MCF 10A (cell line): ENCODE measurements at regions of chr1 and their contacts with region 1.

Region 1: DNA sequence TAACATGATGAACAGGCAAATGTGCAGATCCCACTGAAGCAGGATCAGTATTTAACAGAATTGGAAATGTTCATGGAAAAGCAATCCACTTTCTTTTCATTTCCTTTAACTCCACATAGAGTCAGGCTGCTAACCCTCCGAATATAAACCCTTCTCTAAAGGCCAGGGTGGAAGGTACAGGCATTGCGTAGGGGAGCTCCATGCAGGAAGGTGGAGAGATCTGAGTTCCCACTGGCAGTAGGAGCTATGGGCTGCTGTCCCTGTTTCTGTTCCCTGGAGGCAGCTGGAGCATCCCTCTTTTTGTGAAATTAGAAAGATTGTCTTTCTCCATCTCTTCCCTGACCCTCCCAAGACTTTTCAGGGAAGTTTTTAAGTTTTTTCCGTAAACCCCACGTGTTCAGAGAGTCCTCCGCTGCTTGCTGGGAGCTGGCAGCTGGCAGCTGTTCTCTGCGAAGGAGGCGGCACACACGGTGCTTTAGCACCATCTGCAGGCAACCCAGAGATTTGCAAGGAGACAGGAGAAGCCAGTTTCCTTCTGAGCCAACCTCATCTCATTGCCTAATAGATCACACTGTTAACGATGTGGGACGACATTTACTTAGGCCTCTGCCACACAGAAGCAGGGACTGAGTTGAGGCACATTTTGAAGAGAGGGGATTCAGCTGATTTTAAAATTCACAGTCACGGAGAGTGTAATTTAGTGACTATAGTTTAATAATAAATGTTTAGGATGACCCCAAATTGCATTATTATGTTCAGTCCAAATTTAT is 55.4 kb upstream of the HOOK1 start:
- DNase-seq: peak; percentile 85
- H3K4me3 Mint-ChIP-seq: peak overlapping the region; percentile 38
- H3K27ac Mint-ChIP-seq: no peak overlapping the region
- H3K4me1 Mint-ChIP-seq: peaks cover 28% of the 10 kb centered on the region
- H3K27me3 Mint-ChIP-seq: no peaks in the 10 kb centered on the region
- CTCF ChIP-seq: peak; percentile 96

Region 2: DNA sequence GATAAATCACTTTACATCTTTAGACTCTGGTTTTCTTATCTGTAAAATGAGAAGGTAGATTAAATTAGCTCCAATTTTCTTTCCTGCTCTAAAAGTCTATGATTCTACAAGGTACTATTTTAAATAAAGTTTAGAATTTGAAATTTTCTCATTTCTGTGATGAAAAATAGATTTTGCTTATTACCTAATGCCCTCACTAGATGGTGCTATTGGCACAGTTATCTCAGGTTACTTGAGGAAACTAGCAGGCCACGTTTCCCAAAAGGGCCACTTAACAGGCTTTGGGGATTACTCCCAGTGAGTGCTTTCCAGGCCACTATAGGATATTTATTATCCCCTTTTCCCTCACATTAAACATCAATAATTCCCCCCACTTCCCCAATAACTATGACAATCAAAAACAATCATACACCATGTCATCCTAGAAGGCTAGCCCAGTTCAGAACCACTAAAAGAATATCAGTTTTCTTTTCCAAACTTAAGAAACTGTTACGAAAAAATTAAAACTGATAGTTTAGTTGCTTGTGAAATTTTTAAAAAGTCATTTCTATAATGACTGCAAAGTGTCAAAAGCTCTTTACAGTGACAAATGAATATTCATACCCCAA is 1243.4 kb before region 1 on chr1:
- CTCF ChIA-PET with region 1: no interaction called
- POLR2A ChIA-PET with region 1: no interaction called
- intact Hi-C with region 1: loop called (anchors 2 kb)
- DNase-seq: peak; percentile 79
- H3K4me3 Mint-ChIP-seq: no peak overlapping the region
- H3K27ac Mint-ChIP-seq: no peak overlapping the region
- H3K4me1 Mint-ChIP-seq: no peaks in the 10 kb centered on the region
- H3K27me3 Mint-ChIP-seq: no peaks in the 10 kb centered on the region
- CTCF ChIP-seq: peak; percentile 60

Region 3: DNA sequence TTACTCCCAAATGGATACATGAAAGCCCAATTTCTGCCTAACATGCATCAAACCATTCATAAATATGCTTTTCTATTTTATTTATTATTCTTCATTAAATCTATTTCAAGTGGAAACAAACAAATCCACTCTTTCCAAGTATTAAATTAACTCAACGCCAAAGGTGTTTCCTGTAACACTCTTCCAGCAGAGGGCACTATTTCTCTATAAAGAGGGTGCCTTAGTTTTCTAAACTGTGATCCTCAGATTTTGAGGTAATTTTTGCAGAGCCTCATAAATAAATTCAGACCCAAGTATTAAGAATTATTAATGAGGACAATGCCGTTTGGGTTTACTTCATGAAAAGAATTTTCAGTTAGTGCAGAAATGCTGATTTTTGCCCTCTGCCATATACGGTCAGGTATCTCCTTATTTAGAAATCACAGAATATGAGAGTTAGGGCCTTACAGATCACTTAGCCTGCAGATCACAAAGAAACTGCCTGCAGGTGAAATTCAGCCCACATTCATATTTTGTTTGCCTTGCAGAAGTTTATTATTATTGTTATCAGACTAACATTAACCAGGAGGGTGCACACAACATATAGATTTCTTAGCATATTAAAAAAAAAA is 1019.4 kb before region 1 on chr1:
- CTCF ChIA-PET with region 1: interaction called, 5 read pairs
- POLR2A ChIA-PET with region 1: interaction called, 4 read pairs
- intact Hi-C with region 1: loop called (anchors 2 kb)
- DNase-seq: peak; percentile 69
- H3K4me3 Mint-ChIP-seq: no peak overlapping the region
- H3K27ac Mint-ChIP-seq: no peak overlapping the region
- H3K4me1 Mint-ChIP-seq: peaks cover 6% of the 10 kb centered on the region
- H3K27me3 Mint-ChIP-seq: no peaks in the 10 kb centered on the region
- CTCF ChIP-seq: peak; percentile 54

Region 4: DNA sequence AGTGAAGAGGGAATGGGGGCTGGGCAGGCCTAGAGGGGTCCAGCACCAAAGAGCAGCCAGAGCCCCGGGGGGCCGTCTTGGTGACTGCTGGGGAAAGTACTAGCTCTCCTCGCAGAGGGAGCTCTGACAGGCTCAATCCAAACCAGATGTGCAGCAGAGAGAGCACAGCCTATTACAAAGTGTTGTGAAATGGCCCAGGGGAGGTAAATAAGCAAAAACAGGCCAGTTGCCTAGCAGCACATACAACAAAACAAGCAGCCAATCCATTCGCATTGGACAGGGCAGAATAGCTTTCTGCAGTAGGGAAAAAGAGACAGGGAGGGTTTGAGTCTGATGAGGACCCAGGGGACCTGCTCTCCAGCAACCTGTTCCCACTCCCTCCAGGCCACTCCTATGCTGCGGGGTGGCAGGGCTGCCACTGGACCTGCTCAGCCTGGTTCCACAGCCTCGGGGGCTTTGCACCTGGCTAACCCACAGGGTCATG is 702.1 kb before region 1 on chr1:
- CTCF ChIA-PET with region 1: no interaction called
- POLR2A ChIA-PET with region 1: no interaction called
- intact Hi-C with region 1: loop called (anchors 10 kb)
- DNase-seq: peak; percentile 77
- H3K4me3 Mint-ChIP-seq: no peak overlapping the region
- H3K27ac Mint-ChIP-seq: peak overlapping the region; percentile 50
- H3K4me1 Mint-ChIP-seq: peaks cover 21% of the 10 kb centered on the region
- H3K27me3 Mint-ChIP-seq: no peaks in the 10 kb centered on the region
- CTCF ChIP-seq: no peak

Region 5: DNA sequence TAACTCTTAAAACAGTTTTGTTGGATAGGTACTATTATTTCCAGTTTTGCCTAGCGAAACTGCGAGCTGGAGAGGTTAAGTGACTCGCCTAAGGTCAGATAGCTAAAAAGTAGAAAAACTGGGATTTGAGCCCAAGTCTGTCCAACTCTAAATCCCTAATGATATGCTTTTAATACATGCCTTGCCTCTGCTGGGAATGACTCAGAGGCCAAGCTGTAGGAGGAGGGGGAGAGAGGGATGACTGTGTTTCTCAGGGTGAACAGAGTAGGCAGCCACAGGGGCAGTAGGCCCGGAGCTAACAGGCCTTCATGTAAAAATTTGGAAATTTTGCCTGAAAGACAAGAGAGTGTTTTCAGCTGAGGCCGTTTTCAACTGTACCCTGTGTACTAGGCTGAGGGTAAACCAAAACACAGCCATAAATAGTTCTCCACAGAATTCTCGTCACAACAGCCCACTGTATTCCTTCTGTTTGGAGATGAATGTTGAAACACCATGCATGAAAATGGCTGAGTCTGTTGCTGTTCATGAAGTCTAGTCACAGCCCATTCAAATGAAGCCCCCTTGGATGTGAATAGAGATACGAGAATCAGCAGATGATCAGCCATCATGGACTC is 52.1 kb before region 1 on chr1:
- CTCF ChIA-PET with region 1: interaction called, 21 read pairs
- POLR2A ChIA-PET with region 1: interaction called, 8 read pairs
- intact Hi-C with region 1: loop called (anchors 2 kb)
- DNase-seq: peak; percentile 90
- H3K4me3 Mint-ChIP-seq: no peak overlapping the region
- H3K27ac Mint-ChIP-seq: peak overlapping the region; percentile 33
- H3K4me1 Mint-ChIP-seq: peaks cover 46% of the 10 kb centered on the region
- H3K27me3 Mint-ChIP-seq: no peaks in the 10 kb centered on the region
- CTCF ChIP-seq: no peak

Region 6: DNA sequence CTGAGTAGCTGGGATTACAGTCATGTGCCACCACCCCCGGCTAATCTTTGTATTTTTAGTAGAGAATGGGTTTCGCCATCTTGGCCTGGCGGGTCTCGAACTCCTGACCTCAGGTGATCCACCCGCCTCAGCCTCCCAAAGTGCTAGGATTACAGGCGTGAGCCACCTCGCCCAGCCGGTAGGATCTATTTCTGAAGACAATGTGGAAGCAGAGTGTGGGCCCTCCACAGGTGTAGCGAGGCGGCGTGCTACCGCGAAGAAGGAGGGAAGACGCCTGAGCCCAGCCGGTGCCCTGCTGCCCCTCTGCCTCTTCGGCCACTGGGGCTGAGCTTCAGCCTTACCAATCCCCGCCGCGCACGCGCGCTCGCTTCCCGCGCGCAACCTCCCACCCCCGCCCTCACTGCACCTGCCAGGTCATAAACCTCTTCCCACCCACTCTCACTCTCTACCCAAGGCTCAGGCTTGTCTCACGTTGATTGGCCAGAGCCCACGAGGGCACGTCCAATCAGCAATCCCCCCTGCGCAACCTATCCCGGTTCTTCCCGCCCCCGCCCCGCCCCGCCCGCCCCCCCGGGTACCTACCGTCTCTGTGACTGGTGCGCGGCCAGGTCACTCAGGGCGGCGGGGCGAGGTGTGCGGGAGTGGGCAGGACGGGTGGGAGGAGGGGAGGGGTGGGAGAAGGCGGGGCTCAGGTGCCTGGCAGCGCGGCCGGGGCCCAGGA is 55.0 kb after region 1 on chr1:
- CTCF ChIA-PET with region 1: interaction called, 4 read pairs
- POLR2A ChIA-PET with region 1: interaction called, 88 read pairs
- intact Hi-C with region 1: no loop called
- DNase-seq: peak; percentile 98
- H3K4me3 Mint-ChIP-seq: no peak overlapping the region
- H3K27ac Mint-ChIP-seq: no peak overlapping the region
- H3K4me1 Mint-ChIP-seq: peaks cover 5% of the 10 kb centered on the region
- H3K27me3 Mint-ChIP-seq: no peaks in the 10 kb centered on the region
- CTCF ChIP-seq: no peak